Posterior cingulate gyrus (tissue), 11 donors: ENCODE measurements at regions of chrX and their contacts with region 1.

Region 1: GRCh38 chrX:107000013-107000515 is at the start of gene MORC4:
- DNase-seq: peak; percentile 51 to 96 (median 65)

Region 2: DNA sequence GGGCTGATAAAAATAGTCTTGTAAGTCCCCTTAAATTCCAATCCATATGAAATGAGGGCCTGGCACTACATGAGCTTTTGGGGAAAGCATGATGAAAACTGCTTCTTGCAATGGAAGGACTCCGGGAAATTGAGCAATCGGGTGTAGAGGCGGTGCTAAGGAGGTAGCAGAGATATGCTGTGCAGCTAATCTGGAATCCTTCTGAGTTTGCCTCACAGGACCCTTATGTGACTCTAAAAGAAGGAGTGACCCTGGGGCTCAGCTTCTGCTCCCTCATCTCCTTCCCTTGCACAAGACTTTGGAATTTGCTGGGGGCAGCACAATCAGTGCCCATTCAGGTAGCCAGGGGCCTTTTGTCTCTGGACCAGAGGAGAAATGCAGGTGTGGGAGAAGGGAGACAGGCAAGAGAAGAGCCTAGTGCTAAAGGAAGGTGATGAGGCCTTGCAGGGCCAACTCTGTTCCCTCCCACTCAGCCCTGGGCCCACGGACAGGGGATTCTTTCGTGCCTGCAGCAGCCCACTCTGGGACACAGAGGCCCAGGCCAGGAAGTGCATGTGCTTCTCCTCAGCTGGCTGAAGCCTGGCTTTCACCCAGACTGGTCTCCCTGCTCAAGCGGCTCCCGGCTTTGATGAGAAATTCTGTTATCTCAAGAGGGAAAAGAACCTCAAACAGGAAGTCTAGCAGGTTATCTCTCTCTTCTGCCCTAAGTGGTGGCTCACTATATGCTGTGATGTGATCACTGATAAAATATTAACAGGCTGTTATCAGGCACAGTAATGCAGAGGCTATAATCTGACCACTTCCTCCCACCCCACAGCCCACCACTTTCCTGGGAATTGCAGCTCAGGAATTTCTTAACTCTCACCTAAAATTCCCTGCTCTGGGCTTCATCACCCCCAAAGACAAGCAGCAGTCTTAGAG is 66.8 kb before region 1 on chrX:
- intact Hi-C with region 1: no loop called
- DNase-seq: no peak

Region 3: GRCh38 chrX:107102975-107103374 is 102.9 kb after region 1 on chrX:
- intact Hi-C with region 1: no loop called
- DNase-seq: no peak

Region 4: DNA sequence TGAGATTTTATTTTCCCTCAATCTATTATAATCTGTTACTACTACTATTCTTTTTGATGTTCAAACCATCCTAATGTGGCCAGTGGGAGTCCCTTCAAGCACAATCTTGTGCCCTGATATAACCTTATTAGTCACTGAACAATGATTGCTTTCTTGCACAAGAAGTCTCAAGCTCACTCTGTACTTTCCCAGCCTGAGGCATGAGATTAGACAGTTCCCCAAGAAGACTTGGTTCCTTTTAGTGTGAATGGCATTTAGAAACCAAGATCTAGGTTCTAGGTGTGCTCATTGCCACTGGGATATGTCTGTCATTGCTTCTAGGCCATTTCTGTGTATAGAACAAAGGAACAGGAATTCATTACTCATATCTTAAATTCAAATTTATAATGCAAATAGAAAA is 146.6 kb after region 1 on chrX:
- intact Hi-C with region 1: no loop called
- DNase-seq: no peak

Region 5: DNA sequence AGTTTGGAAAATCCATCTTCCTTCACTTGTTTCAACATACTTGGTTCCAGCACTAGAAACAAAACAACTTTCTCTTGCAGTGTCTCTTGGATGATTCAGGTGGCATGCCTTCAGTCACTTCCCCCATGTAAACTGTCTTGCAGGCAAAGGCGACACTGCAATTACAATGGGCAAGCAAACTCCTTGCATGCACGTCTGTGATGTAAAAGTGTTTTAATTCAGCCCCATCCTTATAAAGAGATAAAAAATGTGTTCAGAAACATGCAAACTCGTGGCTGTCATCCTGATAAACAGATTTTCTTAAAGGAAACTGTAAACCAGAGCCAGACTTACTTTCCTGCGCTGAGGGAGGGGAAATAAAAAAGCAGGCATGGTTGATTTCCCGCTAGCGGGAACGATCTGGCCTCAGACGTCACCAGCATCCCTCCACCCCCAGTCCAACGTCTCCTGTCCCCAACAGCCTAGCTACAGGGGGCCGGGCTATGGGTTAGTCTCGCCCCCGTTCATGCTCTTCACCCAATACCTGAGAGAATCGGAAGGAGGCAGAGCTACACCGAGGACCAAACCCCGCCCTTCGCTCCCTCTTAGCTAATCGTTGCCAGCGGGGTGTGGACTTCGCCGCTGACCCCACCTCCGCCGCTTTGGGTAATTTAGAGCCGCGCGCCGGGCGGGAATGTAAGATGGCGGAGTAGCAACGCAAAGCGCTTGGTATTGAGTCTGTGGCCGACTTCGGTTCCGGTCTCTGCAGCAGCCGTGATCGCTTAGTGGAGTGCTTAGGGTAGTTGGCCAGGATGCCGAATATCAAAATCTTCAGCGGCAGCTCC is 628.0 kb after region 1 on chrX and contains the start of gene PRPS1:
- intact Hi-C with region 1: loop called (anchors 10 kb)
- DNase-seq: peak; percentile 68 to 98 (median 83)

Region 6: GRCh38 chrX:107701493-107702121 is 701.5 kb after region 1 on chrX:
- intact Hi-C with region 1: no loop called
- DNase-seq: no peak